ENCODE measurements at regions of chr2 and their contacts with region 1.

Region 1: GRCh38 chr2:161077367-161078210 is 82.6 kb upstream of the TANK start:
- DNase-seq: peak; percentile 82
- H3K4me3 Mint-ChIP-seq: peak overlapping the region; percentile 54
- H3K27ac Mint-ChIP-seq: peak overlapping the region; percentile 95
- H3K4me1 Mint-ChIP-seq: peaks cover 77% of the 10 kb centered on the region
- H3K27me3 Mint-ChIP-seq: peaks cover 1% of the 10 kb centered on the region

Region 2: GRCh38 chr2:160324161-160324800 is 753.3 kb before region 1 on chr2:
- intact Hi-C with region 1: loop called (anchors 1 kb)
- DNase-seq: no peak
- H3K4me3 Mint-ChIP-seq: no peak overlapping the region
- H3K27ac Mint-ChIP-seq: peak overlapping the region; percentile 35
- H3K4me1 Mint-ChIP-seq: peaks cover 65% of the 10 kb centered on the region
- H3K27me3 Mint-ChIP-seq: peaks cover 6% of the 10 kb centered on the region

Region 3: DNA sequence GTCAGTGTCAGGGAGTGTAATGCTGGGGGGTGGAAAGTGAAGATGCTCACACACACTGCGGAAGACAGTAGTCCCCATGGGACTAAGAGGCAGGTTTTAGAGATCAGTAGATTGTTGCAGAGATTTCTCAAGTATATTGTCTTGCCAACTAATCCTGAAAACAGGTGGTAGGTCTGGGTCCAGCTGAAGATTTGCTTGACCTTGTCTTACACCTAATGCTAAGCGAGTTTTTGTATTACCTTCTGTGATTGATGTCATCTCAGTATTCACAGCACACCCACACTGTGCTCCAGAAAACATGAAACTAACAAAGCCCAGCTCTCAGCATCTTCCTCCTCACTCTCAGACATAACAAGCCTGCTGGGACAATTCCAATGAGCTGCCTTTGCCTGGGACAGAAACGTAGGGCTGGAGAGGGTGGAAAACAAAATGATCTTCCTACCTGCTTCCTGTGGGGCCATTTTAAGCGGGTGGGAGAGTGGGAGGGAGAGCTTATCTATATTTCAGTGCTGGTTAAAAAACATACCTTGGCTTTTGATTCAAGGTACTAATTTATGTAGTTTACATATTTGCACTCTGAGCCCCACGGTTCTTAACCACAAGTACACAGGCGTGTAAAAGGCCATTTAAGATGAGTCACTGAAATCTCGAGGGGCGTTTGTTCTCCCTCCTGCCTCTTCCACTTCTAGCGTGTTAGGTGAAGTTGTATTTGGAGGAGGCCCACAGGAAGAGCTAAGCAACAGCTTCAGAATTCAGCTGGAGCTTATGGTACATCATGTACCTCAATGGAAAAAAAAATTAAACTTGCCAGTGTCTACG is 560.8 kb before region 1 on chr2:
- intact Hi-C with region 1: loop called (anchors 5 kb)
- DNase-seq: no peak
- H3K4me3 Mint-ChIP-seq: peak overlapping the region; percentile 31
- H3K27ac Mint-ChIP-seq: peak overlapping the region; percentile 84
- H3K4me1 Mint-ChIP-seq: peaks cover 42% of the 10 kb centered on the region
- H3K27me3 Mint-ChIP-seq: peaks cover 2% of the 10 kb centered on the region

Region 4: GRCh38 chr2:160742679-160743078 is 334.9 kb before region 1 on chr2:
- intact Hi-C with region 1: no loop called
- DNase-seq: no peak
- H3K4me3 Mint-ChIP-seq: no peak overlapping the region
- H3K27ac Mint-ChIP-seq: no peak overlapping the region
- H3K4me1 Mint-ChIP-seq: no peaks in the 10 kb centered on the region
- H3K27me3 Mint-ChIP-seq: peaks cover 1% of the 10 kb centered on the region

Region 5: DNA sequence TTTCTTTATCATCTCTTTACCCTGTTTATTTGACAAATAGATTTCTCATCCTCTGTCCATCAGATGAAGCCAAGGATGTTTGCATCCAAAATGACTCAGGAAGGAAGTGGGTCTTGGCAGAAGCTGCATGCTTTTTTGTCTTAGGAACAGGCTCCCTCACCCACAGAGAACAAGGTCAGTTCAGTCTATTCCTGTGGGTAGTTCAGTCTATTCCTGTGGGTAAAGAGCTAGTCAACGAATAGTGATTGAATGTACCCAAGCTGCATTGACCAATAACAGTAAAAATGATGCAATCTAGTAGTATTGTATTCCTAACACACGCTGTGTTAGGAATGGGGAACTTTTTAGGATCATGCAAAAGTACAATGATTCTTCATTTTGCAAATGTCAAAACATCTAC is 208.2 kb before region 1 on chr2:
- intact Hi-C with region 1: no loop called
- DNase-seq: no peak
- H3K4me3 Mint-ChIP-seq: no peak overlapping the region
- H3K27ac Mint-ChIP-seq: no peak overlapping the region
- H3K4me1 Mint-ChIP-seq: no peaks in the 10 kb centered on the region
- H3K27me3 Mint-ChIP-seq: peaks cover 2% of the 10 kb centered on the region

Region 6: GRCh38 chr2:160970052-160970965 is 107.3 kb before region 1 on chr2:
- intact Hi-C with region 1: no loop called
- DNase-seq: no peak
- H3K4me3 Mint-ChIP-seq: no peak overlapping the region
- H3K27ac Mint-ChIP-seq: no peak overlapping the region
- H3K4me1 Mint-ChIP-seq: no peaks in the 10 kb centered on the region
- H3K27me3 Mint-ChIP-seq: peaks cover 15% of the 10 kb centered on the region

Region 7: DNA sequence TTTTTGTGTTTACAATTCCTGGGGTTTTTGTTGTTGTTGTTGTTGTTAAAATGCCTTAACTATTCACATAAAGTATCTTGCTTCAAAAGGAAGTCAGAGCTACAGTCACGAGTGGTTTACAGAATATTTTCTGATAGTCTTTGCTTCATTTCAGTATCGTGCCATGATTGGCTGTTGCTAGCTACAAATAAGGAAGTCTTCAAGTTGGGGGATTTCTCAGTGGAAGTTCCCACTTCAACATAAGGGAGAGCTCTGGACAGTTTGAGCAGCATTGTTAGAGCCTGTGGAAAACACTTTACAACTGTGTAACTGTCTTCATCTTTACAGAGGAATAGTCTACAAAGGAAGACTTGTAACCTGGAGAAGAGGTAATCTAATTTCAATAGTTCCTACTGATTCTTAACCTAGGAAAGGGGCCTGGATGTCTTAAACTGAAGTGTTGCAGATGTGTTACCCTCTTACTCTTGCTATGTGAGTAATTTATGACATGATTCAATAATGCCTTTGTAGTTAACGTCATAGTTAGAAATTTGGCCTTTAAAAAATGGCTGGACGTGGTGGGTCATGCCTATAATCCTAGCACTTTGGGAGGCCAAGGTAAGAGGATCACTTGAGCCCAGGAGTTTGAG is 59.2 kb after region 1 on chr2:
- intact Hi-C with region 1: loop called (anchors 1 kb)
- DNase-seq: peak; percentile 64
- H3K4me3 Mint-ChIP-seq: peak overlapping the region; percentile 94
- H3K27ac Mint-ChIP-seq: peak overlapping the region; percentile 98
- H3K4me1 Mint-ChIP-seq: peaks cover 52% of the 10 kb centered on the region
- H3K27me3 Mint-ChIP-seq: no peaks in the 10 kb centered on the region

Region 8: GRCh38 chr2:161273038-161273760 is 195.6 kb after region 1 on chr2:
- intact Hi-C with region 1: loop called (anchors 5 kb)
- DNase-seq: no peak
- H3K4me3 Mint-ChIP-seq: no peak overlapping the region
- H3K27ac Mint-ChIP-seq: no peak overlapping the region
- H3K4me1 Mint-ChIP-seq: peaks cover 5% of the 10 kb centered on the region
- H3K27me3 Mint-ChIP-seq: peaks cover 25% of the 10 kb centered on the region

Region 9: GRCh38 chr2:162013514-162014475 is 936.2 kb after region 1 on chr2:
- intact Hi-C with region 1: loop called (anchors 5 kb)
- DNase-seq: no peak
- H3K4me3 Mint-ChIP-seq: peak overlapping the region; percentile 81
- H3K27ac Mint-ChIP-seq: peak overlapping the region; percentile 95
- H3K4me1 Mint-ChIP-seq: peaks cover 95% of the 10 kb centered on the region
- H3K27me3 Mint-ChIP-seq: no peaks in the 10 kb centered on the region

Measured in activated T-helper 1 cell treated with anti-CD3 and anti-CD28 coated beads, Interleukin-12 subunit alpha, Interleukin-12 subunit beta, Interleukin-2, Interleukin-4 antibody, amounts not matched to agents 30 ng/mL and 10 ng/mL and 1 ng/mL, durations not matched to agents 14 hours and 24 hours and 36 hours (primary cell).